Activated CD4-positive, alpha-beta memory T cell treated with anti-CD3 and anti-CD28 coated beads for 36 hours (primary cell): ENCODE measurements at regions of chr12 and their contacts with region 1.

Region 1: GRCh38 chr12:45234139-45234846 is 18.4 kb downstream of the ANO6 start:
- DNase-seq: peak; percentile 22
- H3K4me3 Mint-ChIP-seq: peak overlapping the region; percentile 16
- H3K27ac Mint-ChIP-seq: peak overlapping the region; percentile 79
- H3K4me1 Mint-ChIP-seq: peaks cover 62% of the 10 kb centered on the region
- H3K27me3 Mint-ChIP-seq: no peaks in the 10 kb centered on the region

Region 2: DNA sequence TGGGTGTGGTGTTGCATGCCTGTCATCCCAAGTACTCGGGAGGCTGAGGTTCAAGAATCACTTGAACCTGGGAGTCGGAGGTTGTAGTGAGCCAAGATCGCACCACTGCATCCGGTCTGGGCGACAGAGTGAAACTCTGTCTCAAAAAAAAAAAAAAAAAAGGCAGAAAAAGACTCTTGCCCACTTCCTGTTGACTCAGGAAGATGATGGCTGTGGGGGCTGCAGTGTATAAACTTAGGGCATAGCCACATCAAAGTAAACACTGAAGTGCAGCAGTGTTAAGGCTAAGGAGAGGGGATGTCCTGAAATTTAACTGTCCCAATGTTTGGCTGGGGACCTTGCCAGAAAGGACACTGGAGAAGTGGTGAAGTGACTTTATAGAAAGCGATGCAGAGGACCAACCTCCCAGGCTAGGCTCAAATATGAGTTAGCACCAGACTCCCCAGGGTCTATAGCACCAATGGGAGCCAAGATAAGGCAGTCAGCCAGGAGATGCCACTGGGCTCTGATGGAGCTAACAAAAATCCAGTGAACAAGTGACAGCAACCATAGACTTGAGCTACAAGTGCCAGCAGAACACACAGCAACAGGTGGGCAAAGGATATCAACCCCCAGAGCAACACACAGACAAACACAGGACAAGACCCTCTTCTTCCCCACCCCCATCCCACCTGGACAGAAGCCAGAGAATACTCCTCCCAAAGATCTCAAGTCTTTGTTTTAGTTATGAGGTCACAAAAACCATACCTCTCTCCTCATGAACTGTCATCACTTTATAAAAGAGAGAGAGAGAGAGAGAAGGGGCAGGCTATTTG is 386.2 kb before region 1 on chr12:
- CTCF ChIA-PET with region 1: no interaction called
- POLR2A ChIA-PET with region 1: no interaction called
- intact Hi-C with region 1: loop called (anchors 10 kb)
- DNase-seq: peak; percentile 81
- H3K4me3 Mint-ChIP-seq: peak overlapping the region; percentile 69
- H3K27ac Mint-ChIP-seq: peak overlapping the region; percentile 94
- H3K4me1 Mint-ChIP-seq: peaks cover 79% of the 10 kb centered on the region
- H3K27me3 Mint-ChIP-seq: no peaks in the 10 kb centered on the region

Region 3: GRCh38 chr12:45215419-45216229 is 18.7 kb before region 1 on chr12 and contains the start of gene ANO6:
- CTCF ChIA-PET with region 1: interaction called, 22 read pairs
- POLR2A ChIA-PET with region 1: interaction called, 4 read pairs
- intact Hi-C with region 1: loop called (anchors 1 kb)
- DNase-seq: peak; percentile 88
- H3K4me3 Mint-ChIP-seq: peak within 1 kb of the TSS; percentile 90
- H3K27ac Mint-ChIP-seq: peak within 1 kb of the TSS; percentile 94
- H3K4me1 Mint-ChIP-seq: peaks cover 48% of the 10 kb centered on the region
- H3K27me3 Mint-ChIP-seq: no peaks in the 10 kb centered on the region
- total RNA-seq, gene ANO6: 19.0 to 21.4 TPM

Region 4: DNA sequence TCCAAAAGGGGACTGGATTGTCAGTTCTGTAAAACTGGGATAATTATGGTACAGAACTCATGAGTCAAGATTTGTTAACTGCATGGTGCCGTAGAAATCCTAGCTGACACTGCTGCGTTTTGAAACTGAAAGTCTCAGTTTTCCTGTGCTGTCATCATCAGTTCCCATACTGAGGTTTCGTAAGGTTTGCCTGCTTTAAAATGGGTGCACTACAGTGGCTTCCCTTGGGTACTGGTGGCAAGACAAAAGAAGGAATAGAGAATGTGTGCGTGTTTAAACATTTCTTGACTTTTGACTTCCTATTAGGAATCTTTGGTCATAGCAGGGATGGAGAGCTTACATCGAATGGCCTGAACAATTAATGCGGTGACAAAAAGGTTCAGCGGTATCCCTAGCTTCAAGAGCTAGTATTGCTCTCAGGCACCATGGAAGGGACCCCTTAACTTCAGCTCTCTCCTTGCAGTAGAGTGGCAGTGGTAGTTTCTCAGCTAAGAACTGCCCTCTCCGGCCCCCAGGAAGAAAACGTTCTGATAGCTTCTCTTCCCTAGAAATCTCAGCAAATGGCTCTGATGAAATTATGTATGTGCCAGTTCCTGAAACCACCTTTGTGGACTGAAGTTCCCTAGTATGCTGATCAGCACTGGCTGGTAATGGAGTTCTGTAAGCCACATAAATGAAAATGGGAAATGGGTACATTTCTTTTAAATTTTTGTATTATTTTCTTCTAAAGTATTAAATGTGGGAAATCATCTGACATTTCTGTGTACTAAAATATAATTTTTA is 10.5 kb after region 1 on chr12:
- CTCF ChIA-PET with region 1: no interaction called
- POLR2A ChIA-PET with region 1: interaction called, 5 read pairs
- intact Hi-C with region 1: loop called (anchors 1 kb)
- DNase-seq: peak; percentile 29
- H3K4me3 Mint-ChIP-seq: no peak overlapping the region
- H3K27ac Mint-ChIP-seq: no peak overlapping the region
- H3K4me1 Mint-ChIP-seq: peaks cover 46% of the 10 kb centered on the region
- H3K27me3 Mint-ChIP-seq: no peaks in the 10 kb centered on the region

Region 5: GRCh38 chr12:45670346-45671065 is 436.2 kb after region 1 on chr12:
- CTCF ChIA-PET with region 1: no interaction called
- POLR2A ChIA-PET with region 1: no interaction called
- intact Hi-C with region 1: loop called (anchors 2 kb)
- DNase-seq: no peak
- H3K4me3 Mint-ChIP-seq: no peak overlapping the region
- H3K27ac Mint-ChIP-seq: no peak overlapping the region
- H3K4me1 Mint-ChIP-seq: peaks cover 27% of the 10 kb centered on the region
- H3K27me3 Mint-ChIP-seq: no peaks in the 10 kb centered on the region